ENCODE measurements at regions of chr9 and their contacts with region 1.

Region 1: GRCh38 chr9:12719431-12719830 is 26.2 kb downstream of the TYRP1 start:
- DNase-seq: peak; percentile 35
- H3K4me3 Mint-ChIP-seq: no peak overlapping the region
- H3K27ac Mint-ChIP-seq: no peak overlapping the region
- H3K4me1 Mint-ChIP-seq: peaks cover 32% of the 10 kb centered on the region
- H3K27me3 Mint-ChIP-seq: no peaks in the 10 kb centered on the region
- CTCF ChIP-seq: peak; percentile 31

Region 2: GRCh38 chr9:11833056-11833455 is 886.4 kb before region 1 on chr9:
- CTCF ChIA-PET with region 1: no interaction called
- POLR2A ChIA-PET with region 1: no interaction called
- intact Hi-C with region 1: no loop called
- DNase-seq: no peak
- H3K4me3 Mint-ChIP-seq: no peak overlapping the region
- H3K27ac Mint-ChIP-seq: no peak overlapping the region
- H3K4me1 Mint-ChIP-seq: no peaks in the 10 kb centered on the region
- H3K27me3 Mint-ChIP-seq: no peaks in the 10 kb centered on the region
- CTCF ChIP-seq: no peak

Region 3: DNA sequence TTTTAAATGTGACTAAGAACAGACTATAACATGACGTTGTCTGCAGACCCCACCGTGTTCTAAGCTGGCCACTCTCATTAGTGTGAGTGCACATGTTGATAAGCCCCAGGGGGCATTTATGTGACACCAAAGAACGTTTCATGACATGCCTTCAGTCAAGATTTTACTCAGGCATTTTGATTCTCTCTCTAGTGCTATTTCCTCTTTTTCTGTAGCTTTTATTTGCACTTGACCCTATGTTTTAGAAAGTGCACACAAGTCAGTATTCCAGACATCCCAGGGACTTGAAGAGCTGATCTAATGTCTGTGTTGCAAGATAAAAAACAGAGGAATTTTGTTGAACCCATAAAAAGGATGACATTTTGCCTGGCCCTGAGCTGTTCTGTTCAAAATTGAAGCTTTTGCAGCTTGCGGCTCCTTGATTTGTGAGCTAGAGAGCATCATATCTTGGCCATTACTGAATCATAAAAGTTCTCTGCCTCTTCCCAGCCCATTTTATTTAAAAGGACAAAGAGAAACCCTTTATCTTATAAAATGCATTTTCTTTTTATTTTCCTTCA is 107.1 kb before region 1 on chr9:
- CTCF ChIA-PET with region 1: no interaction called
- POLR2A ChIA-PET with region 1: no interaction called
- intact Hi-C with region 1: no loop called
- DNase-seq: no peak
- H3K4me3 Mint-ChIP-seq: no peak overlapping the region
- H3K27ac Mint-ChIP-seq: no peak overlapping the region
- H3K4me1 Mint-ChIP-seq: no peaks in the 10 kb centered on the region
- H3K27me3 Mint-ChIP-seq: peaks cover 39% of the 10 kb centered on the region
- CTCF ChIP-seq: no peak

Region 4: DNA sequence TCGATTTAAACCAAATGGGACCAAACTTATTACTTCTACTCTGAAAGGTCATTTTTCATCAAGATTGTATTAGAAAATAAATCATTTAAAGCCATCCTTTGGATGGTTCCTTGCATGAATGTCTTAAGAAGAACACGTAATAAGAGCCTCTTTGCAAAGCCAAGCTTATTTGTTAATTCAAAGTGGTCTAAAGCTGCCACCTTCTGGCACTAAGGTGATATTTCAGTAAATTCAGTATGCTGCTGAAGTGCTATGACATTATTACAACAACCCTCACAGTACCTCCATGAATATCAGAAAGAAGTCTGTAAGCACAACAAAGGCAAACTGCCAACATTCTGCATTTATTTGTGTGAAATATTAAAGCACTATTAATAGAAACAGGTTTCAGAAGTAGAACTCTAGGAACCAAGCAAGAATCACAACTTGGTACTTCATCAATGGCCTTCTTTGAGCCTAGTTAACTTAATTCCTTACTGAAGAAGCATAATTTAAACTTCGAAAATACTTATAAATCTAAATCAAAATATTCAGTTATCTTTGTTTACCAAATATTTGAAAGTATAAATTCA is 79.3 kb before region 1 on chr9:
- CTCF ChIA-PET with region 1: no interaction called
- POLR2A ChIA-PET with region 1: no interaction called
- intact Hi-C with region 1: no loop called
- DNase-seq: peak; percentile 56
- H3K4me3 Mint-ChIP-seq: no peak overlapping the region
- H3K27ac Mint-ChIP-seq: no peak overlapping the region
- H3K4me1 Mint-ChIP-seq: no peaks in the 10 kb centered on the region
- H3K27me3 Mint-ChIP-seq: peaks cover 78% of the 10 kb centered on the region
- CTCF ChIP-seq: peak; percentile 77

Region 5: DNA sequence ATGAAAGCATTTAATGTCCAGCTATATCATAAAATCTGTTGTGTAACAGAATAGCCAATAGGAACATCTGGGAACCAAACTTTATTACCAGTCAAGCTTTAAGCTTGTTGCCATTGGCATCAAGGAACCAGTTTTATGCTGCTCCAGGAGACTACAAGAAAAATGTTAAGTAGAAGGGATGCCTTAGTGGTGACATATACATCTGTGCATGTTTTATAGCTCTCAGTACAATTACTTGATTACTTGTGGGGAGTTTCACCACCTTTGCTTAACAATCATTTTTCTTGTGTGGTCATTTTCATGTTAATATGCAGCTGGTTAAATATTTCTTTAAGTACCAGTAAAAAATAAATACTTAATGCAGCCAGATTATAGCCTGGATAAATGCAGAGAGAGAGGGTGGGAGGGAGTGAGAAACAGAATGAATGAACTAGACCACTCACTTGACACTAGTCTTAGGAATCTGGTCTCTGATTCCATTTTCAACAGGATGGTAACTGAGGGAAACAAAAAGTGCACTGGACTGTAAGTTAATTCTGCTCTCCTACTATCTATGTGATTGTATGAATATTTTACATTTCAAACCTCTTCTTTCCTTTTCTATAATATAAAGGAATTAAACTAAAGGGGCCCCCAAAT is 19.7 kb after region 1 on chr9:
- CTCF ChIA-PET with region 1: interaction called, 14 read pairs
- POLR2A ChIA-PET with region 1: interaction called, 3 read pairs
- intact Hi-C with region 1: no loop called
- DNase-seq: no peak
- H3K4me3 Mint-ChIP-seq: no peak overlapping the region
- H3K27ac Mint-ChIP-seq: no peak overlapping the region
- H3K4me1 Mint-ChIP-seq: peaks cover 12% of the 10 kb centered on the region
- H3K27me3 Mint-ChIP-seq: no peaks in the 10 kb centered on the region
- CTCF ChIP-seq: no peak

Region 6: DNA sequence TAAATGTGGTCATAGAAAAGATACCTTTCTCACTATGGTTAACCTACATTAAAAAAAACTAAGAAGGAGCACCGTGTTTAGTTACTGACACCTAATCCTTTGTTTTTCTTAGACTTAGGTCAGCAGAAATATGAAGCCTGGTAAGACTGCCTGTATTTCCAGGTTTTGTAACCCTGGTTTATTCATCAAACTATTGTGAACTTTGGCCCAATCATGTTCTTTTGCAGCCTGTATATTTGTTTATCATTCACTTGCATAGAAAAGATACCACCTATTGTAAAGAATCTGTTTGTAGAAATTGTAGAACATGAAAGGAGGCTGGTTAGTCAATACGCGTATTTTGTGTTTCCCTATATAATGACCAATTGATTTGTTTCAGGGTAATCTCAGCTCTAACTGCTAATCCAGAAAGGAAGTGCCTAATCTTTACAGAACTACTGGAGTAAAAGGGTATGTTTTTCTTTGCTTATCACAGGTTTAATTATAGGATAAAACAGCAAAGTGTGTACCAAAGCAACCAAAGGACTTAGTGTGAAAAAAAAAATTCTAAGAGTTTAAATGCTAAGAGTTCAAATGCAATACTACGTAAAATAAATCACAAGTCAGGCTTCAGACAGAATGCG is 159.0 kb after region 1 on chr9:
- CTCF ChIA-PET with region 1: interaction called, 29 read pairs
- POLR2A ChIA-PET with region 1: interaction called, 5 read pairs
- intact Hi-C with region 1: no loop called
- DNase-seq: peak; percentile 64
- H3K4me3 Mint-ChIP-seq: no peak overlapping the region
- H3K27ac Mint-ChIP-seq: peak overlapping the region; percentile 62
- H3K4me1 Mint-ChIP-seq: peaks cover 34% of the 10 kb centered on the region
- H3K27me3 Mint-ChIP-seq: no peaks in the 10 kb centered on the region
- CTCF ChIP-seq: no peak

Region 7: DNA sequence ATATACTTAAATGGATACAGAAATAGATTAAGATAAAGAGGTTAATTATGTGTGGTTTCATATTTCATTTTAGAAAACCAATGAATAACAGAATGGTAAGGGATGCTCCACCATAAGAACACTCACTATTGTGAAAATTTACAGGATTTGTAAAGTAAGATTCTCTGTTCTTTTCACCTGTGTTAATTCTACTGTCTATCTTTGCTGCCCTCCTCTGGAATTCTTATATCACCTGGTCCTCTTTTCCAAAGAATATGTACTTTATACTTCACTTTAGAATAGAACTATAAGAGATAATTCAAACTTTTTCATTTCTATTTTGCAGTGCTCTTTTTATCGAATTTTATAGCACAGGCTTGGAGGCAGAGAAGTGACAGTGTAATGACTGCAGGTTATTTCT is 268.8 kb after region 1 on chr9:
- CTCF ChIA-PET with region 1: interaction called, 7 read pairs
- POLR2A ChIA-PET with region 1: no interaction called
- intact Hi-C with region 1: loop called (anchors 1 kb)
- DNase-seq: no peak
- H3K4me3 Mint-ChIP-seq: no peak overlapping the region
- H3K27ac Mint-ChIP-seq: no peak overlapping the region
- H3K4me1 Mint-ChIP-seq: no peaks in the 10 kb centered on the region
- H3K27me3 Mint-ChIP-seq: no peaks in the 10 kb centered on the region
- CTCF ChIP-seq: peak; percentile 15

Region 8: DNA sequence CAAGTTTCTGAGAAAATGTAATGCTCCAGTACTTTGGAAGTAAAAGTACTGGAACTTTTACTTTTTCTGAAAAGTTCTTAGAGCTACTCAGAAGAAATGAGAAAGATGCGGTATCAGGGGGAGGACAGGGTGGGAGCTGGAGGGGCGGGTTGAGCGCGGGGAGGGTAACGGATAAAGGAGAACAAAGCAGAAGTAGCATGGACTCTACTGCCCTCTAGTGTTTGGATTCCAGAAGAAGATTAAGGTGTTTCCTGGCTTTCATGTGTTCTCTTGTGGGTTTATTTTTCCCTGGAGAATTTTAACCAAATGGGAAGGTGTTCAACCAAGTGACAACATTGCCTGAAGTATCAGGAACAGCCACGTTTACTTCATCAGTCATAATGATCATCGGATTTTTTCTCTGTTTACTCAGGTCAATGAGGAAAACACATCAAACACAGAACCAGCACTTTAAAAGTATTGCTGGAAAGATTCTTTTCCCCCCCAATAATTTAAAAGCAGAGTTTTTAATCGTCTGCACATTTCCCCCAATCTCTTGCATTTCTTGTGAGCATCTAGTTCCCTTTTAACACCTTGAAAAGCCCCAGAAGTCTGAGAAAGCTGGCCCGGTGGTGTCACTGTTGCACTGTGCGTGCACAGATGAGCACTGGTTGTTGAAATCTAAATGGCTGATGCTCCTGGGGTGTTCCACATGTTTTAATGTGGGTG is 369.4 kb after region 1 on chr9:
- CTCF ChIA-PET with region 1: interaction called, 24 read pairs
- POLR2A ChIA-PET with region 1: interaction called, 4 read pairs
- intact Hi-C with region 1: loop called (anchors 1 kb)
- DNase-seq: peak; percentile 68
- H3K4me3 Mint-ChIP-seq: peak overlapping the region; percentile 16
- H3K27ac Mint-ChIP-seq: no peak overlapping the region
- H3K4me1 Mint-ChIP-seq: peaks cover 14% of the 10 kb centered on the region
- H3K27me3 Mint-ChIP-seq: no peaks in the 10 kb centered on the region
- CTCF ChIP-seq: peak; percentile 66